ENCODE measurements at regions of chr6 and their contacts with region 1.

Region 1: GRCh38 chr6:53718597-53719460 is 53.3 kb upstream of the KLHL31 start:
- DNase-seq: peak; percentile 45
- ATAC-seq: peak; percentile 83
- H3K4me3 Mint-ChIP-seq: no peak overlapping the region
- H3K27ac Mint-ChIP-seq: no peak overlapping the region
- H3K4me1 Mint-ChIP-seq: peaks cover 5% of the 10 kb centered on the region
- H3K27me3 Mint-ChIP-seq: peaks cover 18% of the 10 kb centered on the region

Region 2: GRCh38 chr6:53701333-53702218 is 17.3 kb before region 1 on chr6:
- CTCF ChIA-PET with region 1: interaction called, 12 read pairs
- POLR2A ChIA-PET with region 1: no interaction called
- intact Hi-C with region 1: loop called in 1 of 2 experiments (anchors 2 kb)
- DNase-seq: peak; percentile 44
- ATAC-seq: peak; percentile 98
- H3K4me3 Mint-ChIP-seq: no peak overlapping the region
- H3K27ac Mint-ChIP-seq: peak overlapping the region; percentile 80
- H3K4me1 Mint-ChIP-seq: peaks cover 11% of the 10 kb centered on the region
- H3K27me3 Mint-ChIP-seq: no peaks in the 10 kb centered on the region

Region 3: DNA sequence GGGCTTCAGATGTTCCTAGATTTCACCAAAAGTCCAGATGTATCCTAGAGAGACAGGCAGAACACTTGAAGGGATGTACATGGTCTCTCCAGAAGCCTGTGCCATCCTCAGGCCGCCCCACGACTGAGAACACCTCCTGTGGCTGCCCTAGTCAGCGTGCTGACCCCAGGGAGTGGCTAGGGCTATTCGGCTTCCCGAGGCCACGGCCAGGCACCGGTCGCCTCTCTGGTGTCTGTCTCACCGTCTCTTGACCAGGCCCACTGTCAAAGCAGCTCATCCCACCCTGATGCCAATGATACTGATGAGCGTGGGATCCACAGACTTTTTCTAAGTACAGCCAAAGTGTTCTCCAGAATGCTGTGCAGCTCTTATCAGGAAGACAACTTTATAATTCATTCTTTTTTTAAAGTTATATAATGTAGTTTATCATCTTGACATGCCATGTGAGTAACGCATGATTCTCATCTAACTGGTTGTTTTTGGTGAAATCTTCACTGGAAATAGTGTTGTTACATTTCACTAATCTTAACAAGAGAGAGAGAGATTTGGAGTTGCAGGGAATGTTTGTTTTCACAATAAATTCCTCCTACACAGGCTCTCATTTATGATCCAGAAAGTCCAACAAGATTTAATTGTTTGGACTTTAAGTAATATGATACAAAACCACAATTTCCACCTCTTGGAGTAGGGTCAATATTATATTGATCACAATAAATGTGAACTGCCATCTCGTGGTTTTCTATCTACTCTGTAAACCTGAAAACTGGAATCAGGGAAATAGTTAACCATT is 11.5 kb before region 1 on chr6:
- CTCF ChIA-PET with region 1: interaction called, 50 read pairs
- POLR2A ChIA-PET with region 1: no interaction called
- intact Hi-C with region 1: loop called in 1 of 2 experiments (anchors 2 kb)
- DNase-seq: no peak
- ATAC-seq: no peak
- H3K4me3 Mint-ChIP-seq: no peak overlapping the region
- H3K27ac Mint-ChIP-seq: no peak overlapping the region
- H3K4me1 Mint-ChIP-seq: no peaks in the 10 kb centered on the region
- H3K27me3 Mint-ChIP-seq: peaks cover 2% of the 10 kb centered on the region

Region 4: DNA sequence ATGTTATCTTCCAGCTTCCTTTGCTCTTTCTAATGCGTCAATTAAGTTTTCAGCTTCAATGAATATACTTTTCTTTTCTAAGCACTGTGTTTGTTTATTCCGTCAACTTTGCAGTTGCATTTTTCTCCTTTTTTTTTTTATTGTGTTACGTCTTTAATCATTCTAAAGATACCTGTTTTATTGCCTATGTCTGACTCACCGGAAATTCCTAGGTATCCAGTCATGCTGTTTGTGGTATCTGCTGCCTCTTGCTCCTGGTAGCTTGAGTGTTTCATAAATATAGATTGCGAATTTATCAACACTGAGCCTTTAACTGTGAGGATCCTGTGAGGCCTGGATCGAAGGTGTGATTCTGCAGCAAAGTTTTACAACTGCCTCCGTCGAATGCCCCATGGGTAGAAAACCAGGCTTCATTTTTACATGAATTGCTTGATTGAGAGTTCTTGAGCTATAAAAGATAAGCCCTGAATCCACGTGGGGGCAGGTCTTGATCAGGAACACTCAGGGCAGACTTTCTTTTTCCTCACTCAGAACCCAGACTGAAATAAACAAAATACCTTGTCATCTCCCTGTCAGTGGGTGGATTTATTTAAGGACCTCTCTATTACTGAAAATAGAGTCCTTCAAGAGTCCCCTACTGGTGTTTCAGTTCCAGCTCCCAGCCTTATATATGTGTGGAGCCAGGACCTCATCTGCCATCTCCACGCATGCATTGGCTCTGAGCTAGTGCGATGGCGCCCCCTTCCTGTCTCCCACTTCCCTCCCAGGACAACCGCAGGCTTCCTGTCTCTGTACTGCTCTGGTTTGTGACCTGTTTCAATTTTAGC is 15.9 kb after region 1 on chr6:
- CTCF ChIA-PET with region 1: interaction called, 32 read pairs
- POLR2A ChIA-PET with region 1: no interaction called
- intact Hi-C with region 1: no loop called
- DNase-seq: peak; percentile 45
- ATAC-seq: peak; percentile 64
- H3K4me3 Mint-ChIP-seq: no peak overlapping the region
- H3K27ac Mint-ChIP-seq: no peak overlapping the region
- H3K4me1 Mint-ChIP-seq: peaks cover 25% of the 10 kb centered on the region
- H3K27me3 Mint-ChIP-seq: peaks cover 6% of the 10 kb centered on the region

Region 5: GRCh38 chr6:53956068-53956711 is 237.4 kb after region 1 on chr6:
- CTCF ChIA-PET with region 1: interaction called, 6 read pairs
- POLR2A ChIA-PET with region 1: no interaction called
- intact Hi-C with region 1: loop called in 1 of 2 experiments (anchors 1 kb)
- DNase-seq: peak; percentile 64
- ATAC-seq: peak; percentile 72
- H3K4me3 Mint-ChIP-seq: no peak overlapping the region
- H3K27ac Mint-ChIP-seq: no peak overlapping the region
- H3K4me1 Mint-ChIP-seq: no peaks in the 10 kb centered on the region
- H3K27me3 Mint-ChIP-seq: no peaks in the 10 kb centered on the region

Measured in activated CD4-positive, alpha-beta T cell treated with anti-CD3 and anti-CD28 coated beads for 36 hours (primary cell).